Endothelial cell of umbilical vein (primary cell): ENCODE measurements at regions of chr11 and their contacts with region 1.

Region 1: GRCh38 chr11:304915-305843 is 2.4 kb upstream of the IFITM2 start:
- DNase-seq: peak; percentile 78
- H3K4me3 ChIP-seq: no peak overlapping the region
- H3K27ac ChIP-seq: no peak overlapping the region
- H3K4me1 ChIP-seq: peaks cover 15% of the 10 kb centered on the region
- H3K27me3 ChIP-seq: peaks cover 2 to 7% of the 10 kb centered on the region in 2 experiments
- CTCF ChIP-seq: peak; percentile 64 to 66
- POLR2A ChIP-seq: no peak

Region 2: GRCh38 chr11:207208-207862 is 97.8 kb before region 1 on chr11 and contains the starts of genes BET1L and RIC8A:
- CTCF ChIA-PET with region 1: no interaction called
- POLR2A ChIA-PET with region 1: no interaction called
- dilution Hi-C with region 1: no loop called
- intact Hi-C with region 1: loop called (anchors 5 kb)
- DNase-seq: peak; percentile 97
- H3K4me3 ChIP-seq: peak within 1 kb of the TSS; percentile 68 to 92 (median 74)
- H3K27ac ChIP-seq: peak within 1 kb of the TSS; percentile 96
- H3K4me1 ChIP-seq: peaks cover 23% of the 10 kb centered on the region
- H3K27me3 ChIP-seq: no peaks in the 10 kb centered on the region
- CTCF ChIP-seq: no peak
- POLR2A ChIP-seq: peak; percentile 84
- total RNA-seq, gene BET1L: 31.0 and 35.5 TPM in 2 replicates
- total RNA-seq, gene RIC8A: 112 and 119 TPM in 2 replicates

Region 3: DNA sequence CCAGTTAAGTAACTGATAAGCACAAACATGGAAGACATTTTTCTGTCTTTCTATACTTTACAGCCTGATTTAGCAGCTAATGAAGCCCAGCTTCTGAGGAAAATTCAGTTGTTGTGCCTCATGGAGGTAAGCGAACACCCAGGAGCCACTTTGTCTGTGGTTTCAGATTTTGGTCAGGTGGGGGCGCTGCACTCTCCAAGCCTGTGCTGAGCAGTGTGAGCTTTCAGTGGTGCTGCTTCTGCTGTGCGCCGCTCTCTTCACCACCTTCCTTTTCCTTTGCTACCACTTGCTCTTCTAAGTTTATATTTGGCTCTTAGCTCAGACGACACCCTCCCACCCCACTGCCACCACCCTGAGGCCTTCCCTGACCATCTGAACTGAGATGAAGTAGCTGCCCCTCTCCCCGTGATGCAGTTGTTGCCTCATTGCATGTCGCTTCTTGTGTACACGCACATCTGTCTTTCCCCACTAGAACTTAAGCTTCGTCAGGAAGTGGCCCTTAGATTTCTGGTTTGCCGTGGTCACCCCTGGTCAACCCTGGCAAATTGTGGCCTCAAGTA is 54.4 kb before region 1 on chr11:
- CTCF ChIA-PET with region 1: interaction called, 25 read pairs
- POLR2A ChIA-PET with region 1: no interaction called
- dilution Hi-C with region 1: no loop called
- intact Hi-C with region 1: no loop called
- DNase-seq: peak; percentile 61
- H3K4me3 ChIP-seq: no peak overlapping the region
- H3K27ac ChIP-seq: no peak overlapping the region
- H3K4me1 ChIP-seq: no peaks in the 10 kb centered on the region
- H3K27me3 ChIP-seq: no peaks in the 10 kb centered on the region
- CTCF ChIP-seq: peak; percentile 67 to 81
- POLR2A ChIP-seq: no peak

Region 4: DNA sequence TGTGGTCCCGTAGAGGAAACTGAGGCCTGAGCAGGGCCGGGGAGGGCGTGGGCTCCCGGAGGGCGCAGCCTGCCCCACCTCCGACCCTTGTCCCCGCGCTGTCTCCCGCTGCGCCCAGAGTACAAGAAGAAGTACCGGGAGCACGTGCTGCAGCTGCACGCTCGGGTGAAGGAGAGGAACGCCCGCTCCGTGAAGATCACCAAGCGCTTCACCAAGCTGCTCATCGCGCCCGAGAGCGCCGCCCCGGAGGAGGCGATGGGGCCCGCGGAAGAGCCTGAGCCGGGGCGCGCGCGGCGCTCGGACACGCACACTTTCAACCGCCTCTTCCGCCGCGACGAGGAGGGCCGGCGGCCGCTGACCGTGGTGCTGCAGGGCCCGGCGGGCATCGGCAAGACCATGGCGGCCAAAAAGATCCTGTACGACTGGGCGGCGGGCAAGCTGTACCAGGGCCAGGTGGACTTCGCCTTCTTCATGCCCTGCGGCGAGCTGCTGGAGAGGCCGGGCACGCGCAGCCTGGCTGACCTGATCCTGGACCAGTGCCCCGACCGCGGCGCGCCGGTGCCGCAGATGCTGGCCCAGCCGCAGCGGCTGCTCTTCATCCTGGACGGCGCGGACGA is 25.1 kb before region 1 on chr11:
- CTCF ChIA-PET with region 1: no interaction called
- POLR2A ChIA-PET with region 1: no interaction called
- dilution Hi-C with region 1: no loop called
- intact Hi-C with region 1: no loop called
- DNase-seq: no peak
- H3K4me3 ChIP-seq: no peak overlapping the region
- H3K27ac ChIP-seq: no peak overlapping the region
- H3K4me1 ChIP-seq: no peaks in the 10 kb centered on the region
- H3K27me3 ChIP-seq: peaks cover 44 to 61% of the 10 kb centered on the region in 2 experiments
- CTCF ChIP-seq: no peak
- POLR2A ChIP-seq: no peak

Region 5: GRCh38 chr11:316031-316701 is 11.0 kb after region 1 on chr11:
- CTCF ChIA-PET with region 1: interaction called, 11 read pairs
- POLR2A ChIA-PET with region 1: no interaction called
- dilution Hi-C with region 1: no loop called
- intact Hi-C with region 1: no loop called
- DNase-seq: no peak
- H3K4me3 ChIP-seq: no peak overlapping the region
- H3K27ac ChIP-seq: no peak overlapping the region
- H3K4me1 ChIP-seq: peaks cover 7% of the 10 kb centered on the region
- H3K27me3 ChIP-seq: peaks cover 19 to 28% of the 10 kb centered on the region in 2 experiments
- CTCF ChIP-seq: no peak
- POLR2A ChIP-seq: no peak

Region 6: DNA sequence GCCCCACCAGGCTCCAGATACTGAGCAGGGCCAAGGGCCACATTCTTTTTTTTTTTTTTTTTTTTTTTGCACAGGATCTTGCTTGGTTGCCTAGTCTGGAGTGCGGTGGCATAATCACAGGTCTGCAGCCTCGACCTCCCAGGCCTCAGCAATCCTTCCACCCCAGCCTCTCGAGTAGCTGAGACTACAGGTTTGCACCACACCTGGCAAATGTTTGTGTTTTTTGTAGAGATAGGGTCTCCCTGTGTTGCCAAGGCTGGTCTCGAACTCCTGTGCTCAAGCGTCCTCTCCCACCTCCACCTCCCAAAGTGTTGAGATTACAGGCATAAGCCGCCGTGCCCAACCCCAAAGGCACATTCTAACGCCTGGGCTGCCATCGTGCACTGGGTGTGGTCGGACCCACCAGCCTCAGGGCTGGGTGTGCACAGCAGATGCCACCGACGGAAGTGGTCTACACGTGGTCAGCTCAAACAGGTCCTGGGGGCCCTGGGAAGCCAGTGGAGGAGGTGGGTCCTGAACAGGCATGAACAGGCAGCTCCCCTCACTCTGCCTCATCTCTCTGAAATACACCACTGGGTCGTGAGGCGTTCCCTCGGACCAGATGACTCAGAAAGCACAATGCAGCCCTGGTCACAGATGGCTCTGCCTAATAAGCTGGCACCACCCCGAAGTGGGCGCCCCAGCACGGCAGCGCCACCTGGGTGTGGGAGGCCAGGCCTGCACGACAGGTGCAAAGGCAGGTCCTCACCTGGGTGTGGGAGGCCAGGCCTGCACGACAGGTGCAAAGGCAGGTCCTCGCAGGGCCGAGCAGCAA is 59.0 kb after region 1 on chr11:
- CTCF ChIA-PET with region 1: interaction called, 79 read pairs
- POLR2A ChIA-PET with region 1: no interaction called
- dilution Hi-C with region 1: no loop called
- intact Hi-C with region 1: no loop called
- DNase-seq: peak; percentile 37
- H3K4me3 ChIP-seq: no peak overlapping the region
- H3K27ac ChIP-seq: no peak overlapping the region
- H3K4me1 ChIP-seq: no peaks in the 10 kb centered on the region
- H3K27me3 ChIP-seq: peaks cover 13% of the 10 kb centered on the region in 2 experiments
- CTCF ChIP-seq: peak in 1 of 2 donors; percentile 61
- POLR2A ChIP-seq: no peak

Region 7: GRCh38 chr11:518463-519250 is 213.5 kb after region 1 on chr11:
- CTCF ChIA-PET with region 1: no interaction called
- POLR2A ChIA-PET with region 1: no interaction called
- dilution Hi-C with region 1: no loop called
- intact Hi-C with region 1: loop called (anchors 5 kb)
- DNase-seq: peak; percentile 97
- H3K4me3 ChIP-seq: no peak overlapping the region
- H3K27ac ChIP-seq: peak overlapping the region; percentile 36
- H3K4me1 ChIP-seq: peaks cover 3% of the 10 kb centered on the region
- H3K27me3 ChIP-seq: no peaks in the 10 kb centered on the region
- CTCF ChIP-seq: peak; percentile 91 to 100
- POLR2A ChIP-seq: no peak